K562 (cell line): ENCODE measurements at regions of chr16 and their contacts with region 1.

Region 1: DNA sequence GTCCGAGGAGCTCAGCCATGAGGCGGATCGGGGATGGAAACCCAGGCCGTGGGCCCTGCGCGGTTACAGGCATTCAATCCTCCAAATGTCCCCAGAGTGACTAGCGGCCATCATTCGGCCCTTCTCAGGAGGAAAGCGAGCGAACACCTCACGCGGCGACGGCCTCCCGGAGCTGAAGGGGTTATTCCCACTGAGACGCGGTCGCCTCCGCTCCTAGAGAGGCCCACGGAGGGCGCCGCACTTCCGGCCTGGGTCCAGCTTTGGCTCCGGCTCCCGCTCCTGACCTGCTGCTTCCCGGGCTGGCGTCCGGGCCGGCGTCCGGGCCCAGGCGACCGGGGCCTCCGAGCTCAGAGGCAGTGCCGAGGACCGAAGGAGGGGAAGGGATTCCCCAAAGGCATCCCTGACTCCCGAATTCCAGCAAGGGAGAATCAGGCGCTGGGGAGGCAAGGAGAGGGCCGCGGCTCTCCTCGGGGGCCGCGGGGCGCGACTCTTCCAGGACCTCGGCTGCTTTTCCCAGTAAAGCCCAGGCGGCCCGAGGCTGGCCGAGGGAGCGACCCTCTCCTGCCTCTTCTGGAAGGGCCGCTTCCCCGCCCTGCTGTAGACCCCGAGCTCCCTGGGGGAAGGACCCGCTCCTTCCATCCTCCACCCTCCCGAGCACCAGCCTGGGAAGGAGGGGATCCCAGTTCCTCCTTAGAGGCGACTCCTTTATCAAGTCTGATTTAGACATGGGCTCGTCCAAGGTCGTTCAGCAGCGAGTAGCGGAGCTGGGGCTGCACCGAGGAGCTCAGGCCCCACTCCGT is 18.6 kb upstream of the ZNF629 start:
- DNase-seq: peak; percentile 87 to 90 (median 89)
- ATAC-seq: peak; percentile 91
- H3K4me3 ChIP-seq: peak overlapping the region; percentile 75
- H3K27ac ChIP-seq: peak overlapping the region; percentile 81
- H3K4me1 ChIP-seq: peaks cover 20 to 36% of the 10 kb centered on the region in 2 experiments
- H3K27me3 ChIP-seq: no peaks in the 10 kb centered on the region
- CTCF ChIP-seq: no peak
- EP300 ChIP-seq: peak; percentile 33; the same call in 1 of the 2 replicates
- POLR2A ChIP-seq: peak; percentile 88
- RAD21 ChIP-seq: peak; percentile 11 to 20; a peak in 1 of 4 replicates

Region 2: DNA sequence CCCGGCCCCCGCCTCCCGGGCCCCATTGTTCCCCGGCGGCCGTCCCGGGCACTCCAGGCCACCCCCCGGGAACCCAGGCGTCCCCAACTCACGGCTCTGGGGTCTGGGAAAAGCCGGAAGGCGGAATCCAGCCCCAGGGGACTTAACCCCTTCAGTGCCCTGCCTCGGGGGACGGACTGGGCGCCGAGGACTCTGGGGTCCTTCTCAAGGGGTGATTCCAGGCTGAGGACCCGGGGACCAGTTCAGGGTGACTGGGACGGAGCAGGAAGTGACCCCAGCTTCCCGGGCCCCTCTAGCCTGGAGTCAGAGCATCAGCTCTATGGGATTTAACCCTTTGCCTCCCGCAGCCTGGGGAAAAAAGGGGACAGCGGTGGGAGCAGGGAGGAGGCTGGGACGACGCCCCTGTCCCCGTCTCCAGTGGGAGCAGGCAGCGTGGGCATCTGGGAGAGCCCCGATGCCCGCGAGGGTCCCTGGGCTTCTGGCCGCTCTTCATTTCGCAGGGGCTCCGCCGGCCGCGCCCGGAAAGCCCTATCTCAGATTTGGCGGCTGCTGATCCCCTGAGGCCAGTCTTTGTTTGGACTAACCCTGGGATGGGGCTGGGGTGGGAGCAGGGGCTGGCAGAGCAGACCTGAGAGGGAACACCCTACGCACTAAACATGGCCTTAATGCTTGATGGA is 18.5 kb before region 1 on chr16 and contains the start of gene ZNF629:
- CTCF ChIA-PET with region 1: no interaction called
- POLR2A ChIA-PET with region 1: interaction called, 12 read pairs
- in situ Hi-C with region 1: no loop called
- intact Hi-C with region 1: loop called (anchors 1 kb)
- DNase-seq: peak; percentile 80 to 85 (median 82)
- ATAC-seq: peak; percentile 82
- H3K4me3 ChIP-seq: peak within 1 kb of the TSS; percentile 73
- H3K27ac ChIP-seq: peak within 1 kb of the TSS; percentile 87
- H3K4me1 ChIP-seq: peaks cover 14 to 32% of the 10 kb centered on the region in 2 experiments; a peak in 4 of 5 replicates
- H3K27me3 ChIP-seq: no peaks in the 10 kb centered on the region
- CTCF ChIP-seq: no peak
- EP300 ChIP-seq: no peak; the same call in 1 of the 2 replicates
- POLR2A ChIP-seq: peak; percentile 70
- RAD21 ChIP-seq: peak in 1 of 2 experiments; percentile 24; a peak in 2 of 4 replicates
- polyA plus RNA-seq, gene ZNF629: 0.44 to 0.66 TPM

Region 3: GRCh38 chr16:30793508-30794069 is 12.0 kb before region 1 on chr16:
- CTCF ChIA-PET with region 1: no interaction called
- POLR2A ChIA-PET with region 1: interaction called, 14 read pairs
- in situ Hi-C with region 1: no loop called
- intact Hi-C with region 1: no loop called
- DNase-seq: no peak
- ATAC-seq: peak; percentile 26
- H3K4me3 ChIP-seq: no peak overlapping the region
- H3K27ac ChIP-seq: no peak overlapping the region
- H3K4me1 ChIP-seq: peaks cover 0 to 10% of the 10 kb centered on the region in 2 experiments; a peak in 3 of 5 replicates
- H3K27me3 ChIP-seq: no peaks in the 10 kb centered on the region
- CTCF ChIP-seq: no peak
- EP300 ChIP-seq: no peak
- POLR2A ChIP-seq: no peak
- RAD21 ChIP-seq: no peak